Sigmoid colon (tissue), 7 donors: ENCODE measurements at regions of chr4 and their contacts with region 1.

Region 1: DNA sequence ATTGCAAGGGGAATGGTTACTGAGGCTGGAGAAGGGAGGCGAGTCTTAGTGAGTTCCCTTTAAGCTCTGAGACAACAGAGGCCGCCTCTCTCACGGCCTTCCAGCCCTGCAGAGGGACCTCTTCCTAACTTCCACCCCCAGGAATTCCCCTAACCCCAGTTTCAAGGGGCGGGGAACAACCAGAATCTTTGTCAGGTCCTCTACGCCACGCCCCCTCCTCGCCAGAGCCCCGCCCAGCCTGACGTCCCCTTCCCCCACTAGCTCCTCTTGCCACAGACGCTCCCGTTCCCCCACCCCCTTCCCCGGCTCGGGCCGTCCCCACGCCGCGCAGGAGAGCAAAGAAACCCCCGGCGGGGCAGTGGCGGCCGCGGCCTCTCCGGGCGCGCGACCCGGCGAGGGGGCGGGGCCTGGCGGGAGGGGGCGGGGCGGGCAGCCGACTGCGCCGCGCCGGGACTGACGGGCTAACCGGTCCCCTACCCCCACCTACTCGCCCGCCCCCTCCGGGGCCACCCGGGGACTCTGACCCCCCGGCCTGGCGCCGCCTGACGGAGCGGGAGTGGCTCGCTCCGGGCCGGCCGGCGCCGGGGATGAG is 12.3 kb upstream of the TMEM156 start:
- DNase-seq: peak; percentile 97
- H3K4me3 ChIP-seq: peak overlapping the region; percentile 49 to 98 (median 93)
- H3K27ac ChIP-seq: peak overlapping the region; percentile 92 to 100 (median 97)
- H3K4me1 ChIP-seq: peaks cover 0 to 59% (median 44%) of the 10 kb centered on the region in 4 donors
- H3K27me3 ChIP-seq: no peaks in the 10 kb centered on the region
- CTCF ChIP-seq: no peak
- EP300 ChIP-seq: no peak
- POLR2A ChIP-seq: peak in 1 of 2 donors; percentile 0

Region 2: DNA sequence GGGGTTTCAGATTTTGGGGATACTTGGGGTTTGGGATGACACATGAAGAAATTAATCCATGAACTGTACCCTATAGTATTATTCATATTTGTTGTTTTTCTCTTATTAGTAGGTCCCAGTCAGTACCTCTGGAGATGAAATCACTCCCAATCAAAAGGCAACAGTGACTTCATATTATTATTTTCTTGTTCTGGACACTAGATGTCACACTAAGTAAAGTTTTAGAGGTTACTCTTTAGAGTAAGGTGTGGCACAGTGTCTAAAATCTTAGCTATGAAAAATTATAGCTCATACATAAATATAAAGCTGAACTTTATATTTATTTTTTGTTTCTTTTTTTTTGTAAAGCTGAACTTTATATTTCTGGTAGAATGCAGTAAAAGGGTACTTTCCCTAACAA is 141.8 kb before region 1 on chr4:
- intact Hi-C with region 1: loop called (anchors 5 kb)
- DNase-seq: no peak
- H3K4me3 ChIP-seq: no peak overlapping the region
- H3K27ac ChIP-seq: peak overlapping the region in 2 of 4 donors; percentile 32 to 54
- H3K4me1 ChIP-seq: peaks cover 0 to 40% (median 17%) of the 10 kb centered on the region in 4 donors
- H3K27me3 ChIP-seq: no peaks in the 10 kb centered on the region
- CTCF ChIP-seq: peak in 3 of 4 experiments; percentile 16 to 44 (median 25)
- EP300 ChIP-seq: no peak
- POLR2A ChIP-seq: no peak

Region 3: DNA sequence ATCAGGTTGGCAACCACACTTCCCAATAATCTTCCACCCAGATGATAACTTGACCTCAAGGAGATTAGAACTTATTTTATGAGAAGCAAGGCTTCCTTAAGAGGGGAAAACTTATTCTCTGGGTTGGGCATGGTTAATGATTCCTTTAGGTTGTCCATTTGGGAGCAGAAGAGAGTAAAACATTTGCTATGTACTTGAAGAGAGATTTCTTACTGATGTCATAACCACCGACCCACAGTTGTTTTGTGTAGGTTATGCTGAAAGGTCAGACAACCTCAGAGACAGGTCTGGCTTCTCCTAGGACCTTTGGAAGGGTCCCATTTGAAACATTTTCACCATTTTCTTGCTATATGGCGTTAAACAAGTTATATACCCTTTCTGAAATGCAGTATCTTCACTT is 120.7 kb before region 1 on chr4:
- intact Hi-C with region 1: loop called (anchors 2 kb)
- DNase-seq: no peak
- H3K4me3 ChIP-seq: no peak overlapping the region
- H3K27ac ChIP-seq: peak overlapping the region; percentile 3 to 89 (median 80)
- H3K4me1 ChIP-seq: peaks cover 0 to 84% (median 57%) of the 10 kb centered on the region in 4 donors
- H3K27me3 ChIP-seq: no peaks in the 10 kb centered on the region
- CTCF ChIP-seq: no peak
- EP300 ChIP-seq: no peak
- POLR2A ChIP-seq: no peak

Region 4: DNA sequence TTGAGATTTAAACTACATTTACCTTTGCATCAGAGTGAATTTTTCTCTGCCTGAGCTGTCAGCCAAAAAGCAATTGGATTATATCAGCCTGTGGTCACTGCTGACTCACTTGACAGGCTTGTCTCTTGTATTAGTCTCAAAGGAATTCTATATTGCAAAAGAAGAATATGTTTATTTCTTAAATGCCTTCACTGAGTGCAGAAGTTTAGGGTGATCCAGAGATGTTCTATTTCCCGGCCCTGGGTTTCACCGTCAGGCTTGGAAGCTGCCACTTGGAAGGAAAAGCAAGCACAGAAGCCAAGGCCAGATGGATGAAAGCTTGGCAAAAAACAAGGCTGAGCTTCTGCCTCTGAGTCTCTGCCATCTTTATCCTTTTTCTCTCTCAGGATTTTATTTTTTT is 95.9 kb before region 1 on chr4:
- intact Hi-C with region 1: loop called (anchors 2 kb)
- DNase-seq: peak; percentile 94
- H3K4me3 ChIP-seq: no peak overlapping the region
- H3K27ac ChIP-seq: peak overlapping the region; percentile 80 to 89 (median 87)
- H3K4me1 ChIP-seq: peaks cover 0 to 79% (median 58%) of the 10 kb centered on the region in 4 donors
- H3K27me3 ChIP-seq: no peaks in the 10 kb centered on the region
- CTCF ChIP-seq: no peak
- EP300 ChIP-seq: peak; percentile 55 to 93 (median 88)
- POLR2A ChIP-seq: no peak

Region 5: GRCh38 chr4:38967260-38968095 is 77.0 kb before region 1 on chr4:
- intact Hi-C with region 1: loop called (anchors 5 kb)
- DNase-seq: no peak
- H3K4me3 ChIP-seq: no peak overlapping the region
- H3K27ac ChIP-seq: peak overlapping the region in 3 of 4 donors; percentile 50 to 61 (median 50)
- H3K4me1 ChIP-seq: peaks cover 0 to 11% (median 4%) of the 10 kb centered on the region in 4 donors
- H3K27me3 ChIP-seq: no peaks in the 10 kb centered on the region
- CTCF ChIP-seq: no peak
- EP300 ChIP-seq: peak in 1 of 4 donors; percentile 57
- POLR2A ChIP-seq: no peak